WTC11 (cell line): ENCODE measurements at regions of chr2 and their contacts with region 1.

Region 1: DNA sequence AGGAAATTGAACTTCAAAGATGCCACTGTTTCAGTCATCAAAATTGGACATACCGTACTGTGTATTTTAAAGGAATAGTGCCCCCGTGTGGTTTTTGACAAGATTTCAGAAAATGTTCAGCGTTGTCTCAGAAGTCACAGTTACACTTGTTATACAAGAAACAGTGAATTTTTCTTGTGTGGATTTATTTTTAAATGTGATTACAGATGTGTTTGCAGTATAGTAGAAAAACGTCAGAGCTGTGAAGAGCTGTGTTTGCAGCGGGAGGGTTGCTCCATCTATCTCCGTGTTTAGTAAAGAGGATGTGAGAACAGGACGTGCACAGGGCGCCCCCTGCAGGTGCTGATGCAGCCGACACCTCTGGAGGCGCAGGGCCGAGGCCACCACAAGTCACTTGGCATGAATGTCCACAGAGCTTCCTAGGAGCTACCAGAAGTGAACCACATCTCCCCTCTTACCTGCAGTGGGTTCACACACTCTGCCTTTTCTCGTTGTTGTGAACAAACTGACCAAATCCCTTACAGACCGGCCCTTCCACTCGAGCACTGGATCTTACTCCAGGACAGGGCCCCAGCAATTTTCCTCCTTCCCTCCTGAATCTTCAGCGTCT is 73.1 kb downstream of the CACNB4 start:
- DNase-seq: peak; percentile 86
- ATAC-seq: peak; percentile 97
- H3K4me3 Mint-ChIP-seq: peak overlapping the region; percentile 66
- H3K27ac Mint-ChIP-seq: no peak overlapping the region
- H3K4me1 Mint-ChIP-seq: no peaks in the 10 kb centered on the region
- H3K27me3 Mint-ChIP-seq: peaks cover 2% of the 10 kb centered on the region; the same call in 1 of the 2 replicates
- CTCF ChIP-seq: peak; percentile 97

Region 2: DNA sequence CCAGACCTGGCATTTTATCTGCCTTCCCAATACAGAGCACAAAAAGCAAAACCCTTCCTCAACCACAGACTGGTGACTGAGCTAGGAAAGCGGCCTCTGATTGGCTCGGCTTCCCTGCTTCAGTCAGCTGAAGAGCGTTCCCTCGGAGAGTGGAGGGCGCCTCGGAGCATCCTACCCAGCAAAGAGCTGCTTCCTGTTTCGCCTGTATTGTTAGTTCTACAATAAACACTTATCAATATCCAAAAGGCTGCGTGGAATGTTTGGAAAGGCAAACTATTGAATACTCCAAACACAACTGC is 51.9 kb before region 1 on chr2:
- CTCF ChIA-PET with region 1: interaction called, 12 read pairs
- POLR2A ChIA-PET with region 1: no interaction called
- DNase-seq: peak; percentile 31
- ATAC-seq: peak; percentile 97
- H3K4me3 Mint-ChIP-seq: no peak overlapping the region
- H3K27ac Mint-ChIP-seq: no peak overlapping the region
- H3K4me1 Mint-ChIP-seq: peaks cover 36% of the 10 kb centered on the region
- H3K27me3 Mint-ChIP-seq: no peaks in the 10 kb centered on the region
- CTCF ChIP-seq: no peak

Region 3: DNA sequence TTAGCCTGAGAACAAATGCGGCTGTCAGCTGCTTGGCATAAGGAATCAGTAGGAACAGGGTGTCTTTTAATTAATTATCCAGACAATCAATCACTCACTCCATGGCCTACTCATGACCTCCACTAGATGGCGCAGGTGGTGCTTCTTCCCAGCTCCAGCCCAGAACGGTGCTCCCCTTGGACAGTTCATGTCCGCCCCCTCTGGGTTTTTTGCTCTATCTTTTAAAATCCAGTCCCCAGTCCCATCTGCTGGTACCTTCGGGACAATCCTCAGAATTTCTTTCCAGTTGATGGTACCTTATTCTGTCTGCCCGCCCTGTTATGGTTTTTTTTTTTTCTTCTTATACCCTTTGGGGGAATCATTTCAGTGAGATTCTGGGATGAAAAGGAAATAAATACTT is 26.7 kb before region 1 on chr2:
- CTCF ChIA-PET with region 1: interaction called, 56 read pairs
- POLR2A ChIA-PET with region 1: no interaction called
- DNase-seq: peak; percentile 81
- ATAC-seq: peak; percentile 93
- H3K4me3 Mint-ChIP-seq: no peak overlapping the region
- H3K27ac Mint-ChIP-seq: no peak overlapping the region
- H3K4me1 Mint-ChIP-seq: peaks cover 25% of the 10 kb centered on the region
- H3K27me3 Mint-ChIP-seq: no peaks in the 10 kb centered on the region
- CTCF ChIP-seq: peak; percentile 74

Region 4: GRCh38 chr2:152012697-152013096 is 13.1 kb before region 1 on chr2:
- CTCF ChIA-PET with region 1: interaction called, 15 read pairs
- POLR2A ChIA-PET with region 1: no interaction called
- DNase-seq: no peak
- ATAC-seq: no peak
- H3K4me3 Mint-ChIP-seq: no peak overlapping the region
- H3K27ac Mint-ChIP-seq: no peak overlapping the region
- H3K4me1 Mint-ChIP-seq: no peaks in the 10 kb centered on the region
- H3K27me3 Mint-ChIP-seq: no peaks in the 10 kb centered on the region
- CTCF ChIP-seq: no peak

Region 5: GRCh38 chr2:152036611-152037469 is 11.1 kb after region 1 on chr2:
- CTCF ChIA-PET with region 1: interaction called, 22 read pairs
- POLR2A ChIA-PET with region 1: no interaction called
- DNase-seq: peak; percentile 78
- ATAC-seq: peak; percentile 47
- H3K4me3 Mint-ChIP-seq: no peak overlapping the region
- H3K27ac Mint-ChIP-seq: no peak overlapping the region
- H3K4me1 Mint-ChIP-seq: peaks cover 51% of the 10 kb centered on the region
- H3K27me3 Mint-ChIP-seq: peaks cover 22% of the 10 kb centered on the region
- CTCF ChIP-seq: peak; percentile 51

Region 6: GRCh38 chr2:152042636-152043615 is 17.1 kb after region 1 on chr2:
- CTCF ChIA-PET with region 1: interaction called, 19 read pairs
- POLR2A ChIA-PET with region 1: no interaction called
- DNase-seq: peak; percentile 36
- ATAC-seq: peak; percentile 57
- H3K4me3 Mint-ChIP-seq: no peak overlapping the region
- H3K27ac Mint-ChIP-seq: 0 out of 2 replicates have a peak overlapping the region, but pooled peaks have one; percentile 32
- H3K4me1 Mint-ChIP-seq: peaks cover 43% of the 10 kb centered on the region
- H3K27me3 Mint-ChIP-seq: no peaks in the 10 kb centered on the region
- CTCF ChIP-seq: no peak

Region 7: DNA sequence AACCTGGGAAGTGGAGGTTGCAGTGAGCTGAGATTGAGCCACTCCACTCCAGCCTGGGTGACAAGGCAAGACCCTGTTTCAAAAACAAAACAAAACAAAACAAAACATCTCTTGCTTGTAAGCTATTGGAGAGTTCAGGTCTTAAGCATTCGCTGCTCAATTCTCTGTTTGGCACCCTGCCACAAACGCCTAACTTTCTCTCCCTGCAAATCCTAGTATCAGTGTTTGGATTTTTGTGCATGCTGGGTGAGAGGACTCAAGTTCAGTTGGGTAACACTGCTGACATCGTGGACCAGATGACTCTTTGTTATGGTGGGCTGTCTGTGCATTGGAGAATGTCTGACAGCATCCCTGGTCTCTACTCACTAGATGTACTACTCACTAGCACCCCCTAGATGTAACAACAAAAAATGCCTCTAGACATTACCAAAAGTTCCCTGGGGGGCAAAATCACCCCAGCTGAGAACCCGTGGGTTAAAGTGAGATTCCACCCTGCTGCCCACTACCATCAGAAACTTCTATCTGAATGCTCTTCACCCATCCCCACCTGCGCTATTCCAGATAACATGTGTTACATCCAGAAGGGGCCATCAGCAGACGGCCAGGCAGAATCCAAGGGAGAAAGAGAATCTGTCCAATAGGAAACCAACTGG is 22.2 kb after region 1 on chr2:
- CTCF ChIA-PET with region 1: interaction called, 19 read pairs
- POLR2A ChIA-PET with region 1: no interaction called
- DNase-seq: no peak
- ATAC-seq: peak; percentile 53
- H3K4me3 Mint-ChIP-seq: no peak overlapping the region
- H3K27ac Mint-ChIP-seq: no peak overlapping the region
- H3K4me1 Mint-ChIP-seq: peaks cover 56% of the 10 kb centered on the region
- H3K27me3 Mint-ChIP-seq: peaks cover 15% of the 10 kb centered on the region
- CTCF ChIP-seq: peak; percentile 34